Activated CD4-positive, alpha-beta T cell treated with anti-CD3 and anti-CD28 coated beads for 36 hours (primary cell): ENCODE measurements at regions of chr2 and their contacts with region 1.

Region 1: GRCh38 chr2:68715353-68716041 is 19.1 kb upstream of the ARHGAP25 start:
- DNase-seq: peak; percentile 75
- ATAC-seq: no peak
- H3K4me3 Mint-ChIP-seq: no peak overlapping the region
- H3K27ac Mint-ChIP-seq: peak overlapping the region; percentile 79
- H3K4me1 Mint-ChIP-seq: peaks cover 75% of the 10 kb centered on the region
- H3K27me3 Mint-ChIP-seq: no peaks in the 10 kb centered on the region

Region 2: DNA sequence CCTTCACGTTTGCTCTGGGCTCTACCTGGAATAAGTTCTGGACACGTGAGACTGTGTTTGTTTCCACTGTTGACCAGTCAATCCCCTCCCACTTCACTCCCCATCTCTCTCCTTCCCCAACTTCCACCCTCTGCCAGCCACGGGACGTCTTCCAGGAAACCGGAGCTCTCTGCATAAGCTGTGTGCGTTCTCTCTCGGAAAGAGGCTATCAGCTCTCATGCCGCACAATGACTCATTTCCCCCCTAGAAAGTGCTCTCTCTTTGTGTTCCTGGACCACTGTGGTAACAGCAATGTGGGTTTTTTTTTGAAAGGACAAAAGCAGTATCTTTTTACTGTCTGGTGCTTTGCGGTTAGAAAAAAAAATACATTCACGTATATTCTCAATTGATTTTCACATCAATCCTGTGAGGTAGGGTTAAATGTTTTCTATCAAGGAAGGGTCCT is 61.9 kb before region 1 on chr2:
- CTCF ChIA-PET with region 1: interaction called, 3 read pairs
- POLR2A ChIA-PET with region 1: interaction called, 4 read pairs
- intact Hi-C with region 1: loop called (anchors 1 to 2 kb)
- DNase-seq: peak; percentile 73
- ATAC-seq: peak; percentile 90
- H3K4me3 Mint-ChIP-seq: peak overlapping the region; percentile 0
- H3K27ac Mint-ChIP-seq: peak overlapping the region; percentile 68
- H3K4me1 Mint-ChIP-seq: peaks cover 43% of the 10 kb centered on the region
- H3K27me3 Mint-ChIP-seq: peaks cover 15% of the 10 kb centered on the region

Region 3: GRCh38 chr2:68734688-68735525 is 19.4 kb after region 1 on chr2 and contains the start of gene ARHGAP25:
- CTCF ChIA-PET with region 1: interaction called, 261 read pairs
- POLR2A ChIA-PET with region 1: interaction called, 13 read pairs
- intact Hi-C with region 1: loop called (anchors 1 kb)
- DNase-seq: peak; percentile 84
- ATAC-seq: peak; percentile 75
- H3K4me3 Mint-ChIP-seq: no peak within 1 kb of the TSS
- H3K27ac Mint-ChIP-seq: no peak within 1 kb of the TSS
- H3K4me1 Mint-ChIP-seq: peaks cover 40% of the 10 kb centered on the region
- H3K27me3 Mint-ChIP-seq: no peaks in the 10 kb centered on the region
- total RNA-seq, gene ARHGAP25: 57.9 to 73.2 TPM

Region 4: DNA sequence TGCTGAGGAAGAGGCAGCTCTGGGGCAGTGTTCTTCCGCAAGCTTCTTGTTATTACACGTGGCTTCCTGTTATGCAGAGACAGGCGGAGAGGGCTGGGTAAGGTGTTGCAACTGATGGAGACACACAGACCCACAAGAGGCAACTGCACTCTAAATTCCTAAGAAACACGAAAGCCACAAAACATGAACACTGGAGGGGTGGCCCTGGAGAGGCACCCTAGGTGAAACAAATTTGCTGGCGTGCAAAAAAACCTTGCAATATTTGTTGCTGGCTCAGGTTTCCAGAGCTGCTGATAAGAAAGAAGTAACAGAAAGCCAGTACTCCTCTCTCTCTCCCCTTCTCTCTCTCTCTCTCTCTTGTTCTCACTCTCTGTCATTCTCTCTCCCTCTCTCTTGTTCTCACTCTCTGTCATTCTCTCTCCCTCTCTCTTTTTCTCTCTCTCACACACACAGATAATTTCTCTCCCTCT is 50.9 kb after region 1 on chr2:
- CTCF ChIA-PET with region 1: interaction called, 6 read pairs
- POLR2A ChIA-PET with region 1: interaction called, 3 read pairs
- intact Hi-C with region 1: loop called (anchors 1 kb)
- DNase-seq: peak; percentile 79
- ATAC-seq: peak; percentile 67
- H3K4me3 Mint-ChIP-seq: peak overlapping the region; percentile 72
- H3K27ac Mint-ChIP-seq: peak overlapping the region; percentile 99
- H3K4me1 Mint-ChIP-seq: peaks cover 98% of the 10 kb centered on the region
- H3K27me3 Mint-ChIP-seq: no peaks in the 10 kb centered on the region

Region 5: GRCh38 chr2:68909793-68910674 is 194.5 kb after region 1 on chr2:
- CTCF ChIA-PET with region 1: interaction called, 57 read pairs
- POLR2A ChIA-PET with region 1: no interaction called
- intact Hi-C with region 1: loop called (anchors 2 kb)
- DNase-seq: peak; percentile 88
- ATAC-seq: peak; percentile 20
- H3K4me3 Mint-ChIP-seq: no peak overlapping the region
- H3K27ac Mint-ChIP-seq: peak overlapping the region; percentile 69
- H3K4me1 Mint-ChIP-seq: peaks cover 36% of the 10 kb centered on the region
- H3K27me3 Mint-ChIP-seq: no peaks in the 10 kb centered on the region